PC-9 (cell line): ENCODE measurements at regions of chr18 and their contacts with region 1.

Region 1: DNA sequence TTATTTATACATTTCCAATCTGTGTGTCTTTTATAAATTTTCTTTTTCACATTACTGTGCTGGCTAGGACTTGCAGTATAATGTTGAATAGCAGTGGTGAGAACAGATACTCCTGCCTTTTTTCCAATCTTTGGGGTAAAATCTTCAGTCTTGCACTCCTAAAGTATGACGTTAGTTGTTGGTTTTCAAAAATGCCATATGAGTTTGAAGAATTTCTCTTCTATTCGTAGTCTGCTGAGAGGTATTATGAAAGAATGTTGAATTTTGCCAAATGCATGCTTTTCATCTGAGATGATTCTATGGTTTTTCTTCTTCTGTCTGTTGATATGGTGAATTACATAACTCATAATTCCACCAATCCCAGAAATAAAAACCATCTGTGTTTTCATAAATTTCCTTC is 335.3 kb upstream of the CHST9 start:
- DNase-seq: no peak
- H3K4me3 ChIP-seq: no peak overlapping the region
- H3K27ac ChIP-seq: no peak overlapping the region
- H3K4me1 ChIP-seq: no peaks in the 10 kb centered on the region
- H3K27me3 ChIP-seq: no peaks in the 10 kb centered on the region
- CTCF ChIP-seq: no peak

Region 2: GRCh38 chr18:27540111-27540510 is 19.7 kb after region 1 on chr18:
- CTCF ChIA-PET with region 1: no interaction called
- POLR2A ChIA-PET with region 1: no interaction called
- intact Hi-C with region 1: loop called (anchors 2 kb)
- DNase-seq: no peak
- H3K4me3 ChIP-seq: no peak overlapping the region
- H3K27ac ChIP-seq: no peak overlapping the region
- H3K4me1 ChIP-seq: no peaks in the 10 kb centered on the region
- H3K27me3 ChIP-seq: no peaks in the 10 kb centered on the region
- CTCF ChIP-seq: no peak